Transverse colon (tissue), 4 donors: ENCODE measurements at regions of chr13 and their contacts with region 1.

Region 1: DNA sequence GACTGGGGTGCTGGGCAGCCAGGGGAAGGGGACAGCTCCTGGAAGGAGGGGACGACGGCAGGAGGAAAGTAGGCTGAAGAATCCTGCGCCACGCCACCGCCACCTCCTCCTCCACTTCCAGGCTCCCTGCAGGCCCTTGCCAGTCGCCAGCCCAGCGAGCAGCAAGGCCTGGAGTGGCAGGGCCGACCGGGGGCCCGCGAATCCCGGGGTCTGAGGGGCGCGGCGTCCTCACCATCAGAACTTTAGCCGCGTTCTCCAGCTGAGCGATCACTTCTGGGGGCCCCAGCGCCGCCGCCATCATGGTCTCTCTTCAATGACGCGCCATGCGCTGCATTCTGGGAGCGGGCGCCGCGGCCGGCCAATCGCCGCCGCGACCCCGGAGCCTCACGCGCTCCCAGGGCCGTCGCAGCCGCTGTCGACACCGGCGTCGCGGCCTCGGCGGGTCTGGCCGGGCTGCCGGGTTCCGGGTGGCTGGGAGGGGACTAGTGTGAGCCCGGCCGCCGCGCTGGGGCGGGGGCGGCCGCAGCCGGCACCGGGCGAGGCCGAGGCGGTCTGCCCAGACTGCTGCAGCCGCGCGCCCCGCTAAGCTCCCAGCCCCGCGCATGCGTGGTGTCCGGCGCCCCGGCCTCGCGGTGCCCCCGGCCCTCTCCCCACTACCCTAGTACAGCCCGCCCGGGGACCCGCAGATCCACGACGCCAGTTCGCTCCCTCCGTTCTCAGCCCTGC is at the start of gene XPO4:
- DNase-seq: peak; percentile 81
- H3K4me3 ChIP-seq: peak within 1 kb of the TSS; percentile 54 to 97 (median 90)
- H3K27ac ChIP-seq: peak within 1 kb of the TSS; percentile 88 to 95 (median 93)
- H3K4me1 ChIP-seq: peaks cover 8 to 19% (median 11%) of the 10 kb centered on the region in 4 donors
- H3K27me3 ChIP-seq: no peaks in the 10 kb centered on the region
- CTCF ChIP-seq: no peak
- EP300 ChIP-seq: no peak
- POLR2A ChIP-seq: peak; percentile 57
- total RNA-seq, gene XPO4: 11.7 to 25.2 (median 13.3) TPM

Region 2: DNA sequence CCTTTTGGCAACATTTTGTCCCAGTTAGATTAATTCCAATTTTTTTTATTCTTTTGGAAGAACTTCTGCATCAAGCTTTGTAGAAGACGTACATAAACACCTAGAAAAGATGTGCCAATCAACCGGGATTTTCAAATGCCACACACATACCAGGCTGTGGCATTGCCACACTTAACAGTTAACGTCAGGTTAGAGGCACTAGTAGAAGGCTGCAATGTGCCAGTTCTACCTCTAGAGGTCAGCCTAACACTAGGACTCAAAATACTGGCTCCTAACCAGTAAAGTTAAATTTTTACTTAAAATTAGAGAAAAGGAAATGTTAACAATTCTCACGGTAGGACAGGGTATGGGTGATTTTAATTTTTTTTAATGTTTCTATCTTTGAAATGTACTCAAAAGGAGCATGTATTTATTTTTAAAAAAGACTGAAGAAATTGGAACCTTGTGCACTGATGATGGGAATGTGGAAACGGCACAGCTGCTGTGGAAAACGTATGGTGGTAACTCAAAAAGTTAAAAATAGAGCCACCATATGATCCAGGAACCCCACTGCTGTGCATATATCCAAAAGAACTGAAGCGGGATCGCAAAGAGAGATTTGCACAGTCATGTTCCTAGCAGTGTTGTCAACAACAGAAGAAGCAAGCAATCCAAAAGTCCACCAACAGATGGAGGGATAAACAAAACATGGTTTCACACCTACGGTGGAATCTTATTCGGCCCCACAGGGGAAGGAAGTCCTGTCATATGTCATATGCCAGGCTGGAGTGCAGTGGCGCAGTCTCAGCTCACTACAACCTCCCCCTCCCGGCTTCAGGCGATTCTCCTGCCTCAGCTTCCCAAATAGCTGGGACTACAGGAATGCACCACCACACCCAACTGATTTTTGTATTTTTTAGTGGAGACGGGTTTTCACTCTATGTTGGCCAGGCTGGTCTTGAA is 407.2 kb before region 1 on chr13:
- in situ Hi-C with region 1: loop called in 1 of 4 experiments (anchors 25 kb)
- intact Hi-C with region 1: no loop called
- DNase-seq: peak; percentile 73
- H3K4me3 ChIP-seq: no peak overlapping the region
- H3K27ac ChIP-seq: peak overlapping the region in 2 of 4 donors; percentile 25 to 34
- H3K4me1 ChIP-seq: peaks cover 5 to 13% (median 8%) of the 10 kb centered on the region in 4 donors
- H3K27me3 ChIP-seq: no peaks in the 10 kb centered on the region
- CTCF ChIP-seq: peak; percentile 91 to 98 (median 94)
- EP300 ChIP-seq: no peak
- POLR2A ChIP-seq: peak; percentile 12